ENCODE measurements at regions of chr6 and their contacts with region 1.

Region 1: GRCh38 chr6:106512048-106512967 is 117.0 kb downstream of the RTN4IP1 start:
- DNase-seq: peak; percentile 79
- ATAC-seq: peak; percentile 68
- H3K4me3 Mint-ChIP-seq: peak overlapping the region; percentile 97
- H3K27ac Mint-ChIP-seq: peak overlapping the region; percentile 94
- H3K4me1 Mint-ChIP-seq: peaks cover 62% of the 10 kb centered on the region
- H3K27me3 Mint-ChIP-seq: no peaks in the 10 kb centered on the region
- CTCF ChIP-seq: no peak

Region 2: GRCh38 chr6:106339334-106340029 is 172.8 kb before region 1 on chr6:
- CTCF ChIA-PET with region 1: no interaction called
- POLR2A ChIA-PET with region 1: interaction called, 11 read pairs
- intact Hi-C with region 1: loop called (anchors 5 kb)
- DNase-seq: no peak
- ATAC-seq: peak; percentile 79
- H3K4me3 Mint-ChIP-seq: peak overlapping the region; percentile 59
- H3K27ac Mint-ChIP-seq: no peak overlapping the region
- H3K4me1 Mint-ChIP-seq: peaks cover 7% of the 10 kb centered on the region
- H3K27me3 Mint-ChIP-seq: peaks cover 17% of the 10 kb centered on the region
- CTCF ChIP-seq: no peak

Region 3: DNA sequence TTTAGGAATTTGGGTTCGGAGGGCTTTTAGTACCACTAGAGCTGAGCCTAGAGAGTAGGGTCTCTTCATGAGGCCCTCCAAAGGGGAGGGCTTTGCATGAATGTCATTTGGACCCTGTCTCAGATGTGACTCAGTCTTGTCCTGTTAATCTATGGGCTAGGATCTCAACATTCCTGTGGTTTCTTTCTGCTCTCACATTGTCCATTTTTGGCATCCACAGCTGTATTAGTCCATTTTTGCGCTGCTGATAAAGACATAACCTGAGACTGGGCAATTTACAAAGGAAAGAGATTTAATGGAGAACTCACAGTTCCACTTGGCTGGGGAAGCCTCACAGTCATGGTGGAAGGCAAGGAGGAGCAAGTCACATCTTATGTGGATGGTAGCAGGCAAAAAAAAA is 90.8 kb before region 1 on chr6:
- CTCF ChIA-PET with region 1: no interaction called
- POLR2A ChIA-PET with region 1: no interaction called
- intact Hi-C with region 1: no loop called
- DNase-seq: no peak
- ATAC-seq: no peak
- H3K4me3 Mint-ChIP-seq: no peak overlapping the region
- H3K27ac Mint-ChIP-seq: no peak overlapping the region
- H3K4me1 Mint-ChIP-seq: no peaks in the 10 kb centered on the region
- H3K27me3 Mint-ChIP-seq: peaks cover 21% of the 10 kb centered on the region
- CTCF ChIP-seq: no peak

Region 4: DNA sequence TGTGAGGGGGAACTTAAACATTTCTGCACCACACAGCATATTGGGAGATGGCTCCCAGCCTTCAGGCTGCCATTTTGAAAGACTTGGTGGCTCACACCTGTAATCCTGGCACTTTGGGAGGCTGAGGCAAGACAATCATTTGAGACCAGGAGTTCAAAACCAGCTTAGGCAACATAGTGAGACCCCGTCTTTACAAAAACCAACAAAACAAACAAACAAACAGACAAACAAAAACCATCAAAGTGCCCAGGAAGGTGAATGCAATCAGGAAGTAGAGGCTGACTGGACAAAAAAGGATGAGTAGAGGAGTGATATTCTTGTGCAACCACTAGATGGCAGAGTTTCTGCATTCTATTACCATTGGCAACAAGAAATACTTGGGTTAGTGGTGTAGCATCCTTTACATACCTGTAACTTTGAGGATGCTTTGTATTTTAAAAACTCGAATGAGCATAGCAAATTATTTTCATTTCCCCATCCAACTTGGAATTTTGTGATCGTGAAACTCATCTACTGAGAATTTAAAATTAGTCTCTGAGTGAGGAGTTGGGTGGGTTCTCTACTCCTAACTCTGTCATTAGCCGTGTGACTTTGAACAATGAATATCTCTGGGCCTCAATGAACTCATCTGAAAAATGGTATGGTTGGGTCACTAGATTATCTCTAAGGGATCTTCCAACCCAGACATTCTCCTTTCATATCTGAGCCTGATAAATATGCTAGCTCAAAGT is 67.4 kb before region 1 on chr6:
- CTCF ChIA-PET with region 1: interaction called, 28 read pairs
- POLR2A ChIA-PET with region 1: interaction called, 7 read pairs
- intact Hi-C with region 1: loop called (anchors 1 kb)
- DNase-seq: no peak
- ATAC-seq: peak; percentile 43
- H3K4me3 Mint-ChIP-seq: no peak overlapping the region
- H3K27ac Mint-ChIP-seq: no peak overlapping the region
- H3K4me1 Mint-ChIP-seq: peaks cover 16% of the 10 kb centered on the region
- H3K27me3 Mint-ChIP-seq: peaks cover 18% of the 10 kb centered on the region
- CTCF ChIP-seq: peak; percentile 25

Region 5: GRCh38 chr6:106461084-106461483 is 51.2 kb before region 1 on chr6:
- CTCF ChIA-PET with region 1: no interaction called
- POLR2A ChIA-PET with region 1: no interaction called
- intact Hi-C with region 1: no loop called
- DNase-seq: no peak
- ATAC-seq: no peak
- H3K4me3 Mint-ChIP-seq: no peak overlapping the region
- H3K27ac Mint-ChIP-seq: no peak overlapping the region
- H3K4me1 Mint-ChIP-seq: no peaks in the 10 kb centered on the region
- H3K27me3 Mint-ChIP-seq: no peaks in the 10 kb centered on the region
- CTCF ChIP-seq: no peak

Region 6: DNA sequence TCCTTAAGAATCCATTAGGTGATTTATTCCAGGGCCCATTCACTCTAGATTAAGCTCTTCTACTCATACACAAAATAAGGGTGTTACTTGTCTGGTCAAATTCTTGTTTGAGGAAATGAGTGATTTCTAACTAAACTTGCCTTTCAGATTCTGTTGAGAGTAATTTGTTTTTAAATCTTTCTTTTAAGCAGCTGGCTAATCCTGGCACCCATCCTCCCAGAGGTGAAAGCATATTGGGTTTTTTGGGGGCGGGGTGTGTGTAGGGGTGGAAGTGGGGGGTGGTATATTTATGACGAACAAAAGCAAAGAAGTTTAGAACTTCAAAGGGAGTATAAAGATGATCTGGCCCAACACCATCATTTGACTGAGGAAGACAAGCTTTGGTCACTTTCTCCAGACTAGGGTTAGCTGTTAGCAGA is 22.3 kb after region 1 on chr6:
- CTCF ChIA-PET with region 1: interaction called, 12 read pairs
- POLR2A ChIA-PET with region 1: interaction called, 16 read pairs
- intact Hi-C with region 1: no loop called
- DNase-seq: no peak
- ATAC-seq: peak; percentile 23
- H3K4me3 Mint-ChIP-seq: peak overlapping the region; percentile 19
- H3K27ac Mint-ChIP-seq: peak overlapping the region; percentile 82
- H3K4me1 Mint-ChIP-seq: peaks cover 79% of the 10 kb centered on the region
- H3K27me3 Mint-ChIP-seq: no peaks in the 10 kb centered on the region
- CTCF ChIP-seq: no peak

Region 7: GRCh38 chr6:106546691-106547414 is 34.5 kb after region 1 on chr6:
- CTCF ChIA-PET with region 1: interaction called, 89 read pairs
- POLR2A ChIA-PET with region 1: interaction called, 44 read pairs
- intact Hi-C with region 1: loop called (anchors 1 kb)
- DNase-seq: no peak
- ATAC-seq: peak; percentile 81
- H3K4me3 Mint-ChIP-seq: peak overlapping the region; percentile 70
- H3K27ac Mint-ChIP-seq: peak overlapping the region; percentile 98
- H3K4me1 Mint-ChIP-seq: peaks cover 49% of the 10 kb centered on the region
- H3K27me3 Mint-ChIP-seq: no peaks in the 10 kb centered on the region
- CTCF ChIP-seq: no peak

Region 8: DNA sequence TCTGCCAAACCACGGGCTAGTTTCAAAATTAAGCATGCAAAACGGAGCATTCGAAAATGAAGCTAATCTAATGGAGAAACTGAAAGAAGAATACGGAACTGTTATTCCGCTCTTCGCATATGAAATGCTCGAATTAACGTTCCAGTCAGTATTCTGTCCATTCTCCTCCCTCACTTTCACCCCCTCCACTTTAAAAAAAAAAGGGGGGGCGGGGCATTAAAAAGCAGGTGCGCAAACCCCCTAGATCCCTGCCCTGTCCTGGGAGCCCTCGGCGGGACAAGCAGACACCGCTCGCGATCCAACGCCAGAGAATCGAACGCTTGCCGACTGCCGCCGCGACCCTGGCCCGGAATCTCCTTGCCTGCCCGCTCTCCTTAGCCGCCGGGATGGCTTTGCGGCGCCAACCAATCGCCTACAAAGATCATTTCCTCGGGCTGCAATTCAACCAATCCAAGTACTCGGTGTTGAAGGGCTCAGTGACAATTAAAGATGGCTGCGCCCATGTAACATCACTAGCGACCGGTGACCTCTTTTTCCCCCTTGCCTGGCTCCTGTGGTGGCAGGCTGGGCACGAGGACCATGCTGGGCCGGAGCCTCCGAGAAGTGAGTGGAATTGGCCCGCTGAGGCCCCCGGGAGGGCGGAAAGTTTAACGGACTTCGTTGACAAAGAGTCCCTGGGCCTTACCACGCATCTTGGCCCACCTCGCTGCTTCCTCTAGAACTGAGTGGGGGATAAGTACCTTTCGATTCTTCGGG is 117.0 kb after region 1 on chr6 and contains the starts of genes QRSL1 and RTN4IP1:
- CTCF ChIA-PET with region 1: no interaction called
- POLR2A ChIA-PET with region 1: interaction called, 4 read pairs
- intact Hi-C with region 1: loop called (anchors 2 kb)
- DNase-seq: peak; percentile 74
- ATAC-seq: peak; percentile 84
- H3K4me3 Mint-ChIP-seq: peak within 1 kb of the TSS; percentile 93
- H3K27ac Mint-ChIP-seq: peak within 1 kb of the TSS; percentile 96
- H3K4me1 Mint-ChIP-seq: peaks cover 72% of the 10 kb centered on the region
- H3K27me3 Mint-ChIP-seq: no peaks in the 10 kb centered on the region
- CTCF ChIP-seq: no peak
- total RNA-seq, gene QRSL1: 28.4 and 31.1 TPM in 2 replicates
- total RNA-seq, gene RTN4IP1: 9.9 and 11.2 TPM in 2 replicates